ENCODE measurements at regions of chr12 and their contacts with region 1.

Region 1: DNA sequence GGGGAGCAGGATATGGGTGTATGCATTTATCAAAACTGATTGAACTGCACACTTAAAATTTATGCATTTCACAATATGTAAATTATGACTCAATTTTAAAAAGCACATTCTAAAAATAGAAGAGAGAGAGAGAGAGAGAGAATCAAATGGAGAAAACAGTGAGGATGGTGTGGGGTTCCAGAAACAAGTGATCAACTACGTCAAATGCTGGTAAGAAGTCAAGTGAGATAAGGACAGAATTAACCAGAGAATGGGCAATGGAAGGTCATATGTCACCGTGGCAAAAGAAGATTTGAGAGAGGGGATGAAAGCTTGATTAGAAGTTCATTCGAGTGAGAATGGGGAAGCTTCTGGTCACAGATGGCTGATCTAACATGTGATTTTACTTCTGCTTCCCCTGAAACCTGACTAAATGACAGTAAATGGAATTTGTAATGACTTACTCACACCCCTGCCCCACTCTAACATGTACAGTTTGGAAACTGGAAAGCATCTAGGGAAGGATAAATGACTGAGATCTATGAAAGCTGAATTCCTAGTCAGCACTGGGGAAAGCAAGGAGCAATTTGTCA is 276.5 kb upstream of the AMIGO2 start:
- DNase-seq: peak; percentile 72
- H3K4me3 Mint-ChIP-seq: peak overlapping the region; percentile 64
- H3K27ac Mint-ChIP-seq: peak overlapping the region; percentile 100
- H3K4me1 Mint-ChIP-seq: peaks cover 82% of the 10 kb centered on the region
- H3K27me3 Mint-ChIP-seq: no peaks in the 10 kb centered on the region

Region 2: GRCh38 chr12:46794593-46795190 is 561.5 kb before region 1 on chr12:
- CTCF ChIA-PET with region 1: no interaction called
- intact Hi-C with region 1: loop called (anchors 2 kb)
- DNase-seq: peak; percentile 46
- H3K4me3 Mint-ChIP-seq: no peak overlapping the region
- H3K27ac Mint-ChIP-seq: peak overlapping the region; percentile 80
- H3K4me1 Mint-ChIP-seq: peaks cover 27% of the 10 kb centered on the region
- H3K27me3 Mint-ChIP-seq: no peaks in the 10 kb centered on the region

Region 3: DNA sequence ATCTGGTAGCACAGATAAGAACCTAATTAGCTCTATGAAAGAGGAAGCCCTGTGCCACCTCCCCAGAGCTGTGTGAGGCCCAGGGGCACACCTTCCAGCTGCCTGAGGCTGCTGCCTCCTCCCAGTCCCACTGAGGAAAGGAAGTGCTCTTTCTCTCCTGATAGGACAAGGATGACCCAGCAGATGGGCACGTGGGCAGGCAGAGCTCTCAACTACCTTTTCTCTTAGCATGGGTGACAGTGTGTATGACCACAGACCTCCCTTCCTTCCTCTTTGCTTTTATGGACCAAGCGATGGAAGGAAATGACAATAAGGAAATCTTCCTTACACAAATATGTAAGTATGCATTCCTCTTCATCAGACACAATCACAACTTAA is 148.9 kb before region 1 on chr12:
- CTCF ChIA-PET with region 1: interaction called, 3 read pairs
- intact Hi-C with region 1: loop called (anchors 1 kb)
- DNase-seq: peak; percentile 81
- H3K4me3 Mint-ChIP-seq: peak overlapping the region; percentile 94
- H3K27ac Mint-ChIP-seq: peak overlapping the region; percentile 100
- H3K4me1 Mint-ChIP-seq: peaks cover 71% of the 10 kb centered on the region
- H3K27me3 Mint-ChIP-seq: no peaks in the 10 kb centered on the region

Region 4: DNA sequence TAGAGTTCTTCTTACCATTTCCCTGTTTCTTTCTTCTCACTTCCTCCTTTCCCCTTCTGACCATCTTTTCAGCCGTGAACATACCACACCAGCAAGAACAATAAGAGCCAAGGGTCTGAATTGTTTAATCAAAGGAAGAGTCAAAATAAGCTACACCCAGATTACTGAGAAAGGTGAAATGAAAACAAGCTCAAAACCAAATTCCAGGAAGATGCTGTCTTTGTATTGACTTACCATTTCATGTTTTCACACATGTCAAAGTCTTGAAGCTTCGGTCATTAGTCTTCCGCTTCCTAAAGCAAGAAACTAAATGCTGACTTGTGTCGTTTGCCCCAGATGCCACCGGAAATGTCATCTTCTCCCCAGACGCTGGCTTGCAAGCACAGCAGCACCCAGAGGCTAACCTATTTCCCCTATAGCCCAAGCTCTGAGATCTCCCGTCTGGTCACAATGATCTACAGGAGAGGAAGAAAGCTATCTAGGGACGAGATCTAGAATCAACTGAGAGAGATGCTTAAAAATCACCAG is 140.0 kb before region 1 on chr12:
- CTCF ChIA-PET with region 1: interaction called, 4 read pairs
- intact Hi-C with region 1: loop called (anchors 1 kb)
- DNase-seq: peak; percentile 83
- H3K4me3 Mint-ChIP-seq: peak overlapping the region; percentile 94
- H3K27ac Mint-ChIP-seq: peak overlapping the region; percentile 100
- H3K4me1 Mint-ChIP-seq: peaks cover 12% of the 10 kb centered on the region
- H3K27me3 Mint-ChIP-seq: no peaks in the 10 kb centered on the region

Region 5: DNA sequence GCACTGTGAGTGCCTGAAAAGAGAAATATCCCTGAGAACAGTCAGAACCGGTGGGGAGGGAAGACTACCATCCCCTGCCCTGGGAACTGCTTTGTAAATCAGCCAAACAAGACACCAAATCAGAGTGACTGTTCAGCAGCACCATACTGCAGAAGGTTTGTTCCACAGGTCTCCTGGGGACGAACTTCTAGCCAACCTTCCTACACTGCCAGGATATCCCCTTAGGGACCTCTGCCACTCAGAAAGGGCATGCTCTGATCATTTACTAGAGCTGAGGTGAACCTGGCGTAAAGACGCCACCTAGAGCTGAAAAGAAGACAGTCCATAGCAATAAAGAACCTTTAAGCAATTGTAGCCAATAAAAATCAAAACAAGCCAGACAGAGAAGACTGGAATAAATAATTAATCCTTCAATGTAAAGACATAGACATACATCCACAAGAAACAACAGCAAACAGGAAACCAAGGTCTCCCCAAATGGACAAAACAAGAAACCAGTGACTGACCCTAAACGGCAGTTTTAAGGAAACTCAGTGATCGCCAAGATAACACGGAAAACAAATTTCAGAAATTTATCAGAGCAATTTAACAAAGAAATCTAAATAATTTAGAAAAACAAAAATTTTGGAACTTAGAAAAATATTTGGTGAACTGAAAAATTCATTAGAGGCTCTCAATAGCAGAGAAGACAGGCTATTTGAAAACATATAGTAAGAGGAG is 48.4 kb before region 1 on chr12:
- CTCF ChIA-PET with region 1: interaction called, 8 read pairs
- intact Hi-C with region 1: loop called (anchors 2 kb)
- DNase-seq: peak; percentile 74
- H3K4me3 Mint-ChIP-seq: peak overlapping the region; percentile 91
- H3K27ac Mint-ChIP-seq: peak overlapping the region; percentile 98
- H3K4me1 Mint-ChIP-seq: peaks cover 73% of the 10 kb centered on the region
- H3K27me3 Mint-ChIP-seq: no peaks in the 10 kb centered on the region

Region 6: DNA sequence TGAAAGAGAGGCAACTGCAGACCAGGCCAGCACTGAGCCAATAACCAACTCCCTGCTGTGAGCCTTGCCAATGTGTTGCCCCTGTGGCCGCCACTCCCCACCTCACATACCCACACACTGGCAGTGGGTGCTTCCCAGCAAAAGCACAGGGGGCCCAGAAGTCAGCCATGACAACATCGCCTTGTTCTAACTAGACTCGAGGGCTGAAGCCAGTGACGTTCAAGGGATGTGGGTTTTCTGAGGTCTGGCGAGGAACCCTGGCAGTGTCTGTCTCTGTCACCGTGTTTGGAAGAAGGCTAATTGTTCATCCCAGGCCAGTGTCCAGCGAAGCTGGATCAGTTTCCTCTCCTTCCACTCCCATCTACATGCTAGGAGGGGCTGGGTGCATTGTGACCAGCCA is 35.4 kb after region 1 on chr12:
- CTCF ChIA-PET with region 1: interaction called, 40 read pairs
- intact Hi-C with region 1: loop called (anchors 1 kb)
- DNase-seq: peak; percentile 88
- H3K4me3 Mint-ChIP-seq: peak overlapping the region; percentile 77
- H3K27ac Mint-ChIP-seq: peak overlapping the region; percentile 100
- H3K4me1 Mint-ChIP-seq: peaks cover 90% of the 10 kb centered on the region
- H3K27me3 Mint-ChIP-seq: no peaks in the 10 kb centered on the region

Region 7: GRCh38 chr12:47419497-47419896 is 63.3 kb after region 1 on chr12:
- CTCF ChIA-PET with region 1: interaction called, 3 read pairs
- intact Hi-C with region 1: loop called (anchors 1 kb)
- DNase-seq: no peak
- H3K4me3 Mint-ChIP-seq: no peak overlapping the region
- H3K27ac Mint-ChIP-seq: peak overlapping the region; percentile 83
- H3K4me1 Mint-ChIP-seq: peaks cover 51% of the 10 kb centered on the region
- H3K27me3 Mint-ChIP-seq: no peaks in the 10 kb centered on the region

Measured in activated naive CD4-positive, alpha-beta T cell treated with anti-CD3 and anti-CD28 coated beads for 36 hours (primary cell).